Left ventricle myocardium superior (tissue), 1 donor: ENCODE measurements at regions of chr2 and their contacts with region 1.

Region 1: DNA sequence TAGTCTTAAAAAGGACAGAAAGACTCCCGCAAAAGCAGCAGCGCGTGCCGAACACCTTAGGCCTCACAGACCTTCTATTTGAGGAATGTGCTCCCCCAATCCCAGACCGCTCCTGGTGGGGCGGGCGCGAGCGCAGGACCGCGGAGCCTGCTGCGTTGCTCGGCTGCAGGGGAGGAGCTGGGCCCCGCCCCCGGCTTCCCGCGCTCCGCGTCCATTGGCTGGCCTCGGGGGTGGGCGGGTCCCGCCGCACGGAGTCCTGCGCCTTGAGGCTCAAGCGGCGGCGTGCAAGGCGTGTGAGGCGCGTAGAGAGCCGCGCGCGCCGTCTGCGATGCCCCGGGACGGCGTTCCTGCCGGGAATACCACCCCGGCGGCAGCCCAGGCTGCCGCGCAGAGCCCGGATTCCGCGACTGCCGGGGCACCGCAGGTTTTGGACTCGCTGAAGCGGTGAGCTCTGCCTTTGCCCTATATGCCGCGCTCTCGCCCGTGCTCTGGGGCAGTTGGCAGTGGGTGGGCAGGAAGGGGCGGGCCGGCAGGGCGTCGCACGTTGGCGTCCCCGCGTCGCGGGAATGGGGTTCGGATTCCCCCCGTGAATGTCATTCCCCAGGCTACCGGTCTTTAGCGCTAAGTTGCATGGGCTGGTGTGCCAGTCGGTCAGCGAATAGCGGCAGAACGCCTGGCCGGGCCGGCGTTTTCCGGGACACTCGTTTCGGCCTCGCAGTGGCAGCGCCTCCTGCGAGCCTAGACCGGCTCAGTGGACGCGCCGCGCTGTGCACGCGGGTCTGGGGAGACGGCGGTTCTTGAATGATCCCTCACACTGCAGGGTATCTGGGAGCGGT is 49.6 kb upstream of the PAIP2B start:
- DNase-seq: peak; percentile 97
- ATAC-seq: peak; percentile 97

Region 2: GRCh38 chr2:71226965-71227560 is 49.5 kb before region 1 on chr2 and contains the start of gene PAIP2B:
- intact Hi-C with region 1: loop called (anchors 10 kb)
- DNase-seq: peak; percentile 99
- ATAC-seq: peak; percentile 93
- total RNA-seq, gene PAIP2B: 78.1 TPM